HepG2 (cell line): ENCODE measurements at regions of chr20 and their contacts with region 1.

Region 1: GRCh38 chr20:18276821-18277220 is 11.5 kb upstream of the ZNF133 start:
- DNase-seq: peak; percentile 75
- ATAC-seq: peak; percentile 95
- H3K4me3 ChIP-seq: no peak overlapping the region
- H3K27ac ChIP-seq: no peak overlapping the region
- H3K4me1 ChIP-seq: peaks cover 10% of the 10 kb centered on the region
- H3K27me3 ChIP-seq: peaks cover 0 to 18% of the 10 kb centered on the region in 2 experiments; a peak in 1 of 5 replicates
- CTCF ChIP-seq: peak; percentile 98
- EP300 ChIP-seq: no peak
- POLR2A ChIP-seq: no peak
- RAD21 ChIP-seq: peak; percentile 92

Region 2: DNA sequence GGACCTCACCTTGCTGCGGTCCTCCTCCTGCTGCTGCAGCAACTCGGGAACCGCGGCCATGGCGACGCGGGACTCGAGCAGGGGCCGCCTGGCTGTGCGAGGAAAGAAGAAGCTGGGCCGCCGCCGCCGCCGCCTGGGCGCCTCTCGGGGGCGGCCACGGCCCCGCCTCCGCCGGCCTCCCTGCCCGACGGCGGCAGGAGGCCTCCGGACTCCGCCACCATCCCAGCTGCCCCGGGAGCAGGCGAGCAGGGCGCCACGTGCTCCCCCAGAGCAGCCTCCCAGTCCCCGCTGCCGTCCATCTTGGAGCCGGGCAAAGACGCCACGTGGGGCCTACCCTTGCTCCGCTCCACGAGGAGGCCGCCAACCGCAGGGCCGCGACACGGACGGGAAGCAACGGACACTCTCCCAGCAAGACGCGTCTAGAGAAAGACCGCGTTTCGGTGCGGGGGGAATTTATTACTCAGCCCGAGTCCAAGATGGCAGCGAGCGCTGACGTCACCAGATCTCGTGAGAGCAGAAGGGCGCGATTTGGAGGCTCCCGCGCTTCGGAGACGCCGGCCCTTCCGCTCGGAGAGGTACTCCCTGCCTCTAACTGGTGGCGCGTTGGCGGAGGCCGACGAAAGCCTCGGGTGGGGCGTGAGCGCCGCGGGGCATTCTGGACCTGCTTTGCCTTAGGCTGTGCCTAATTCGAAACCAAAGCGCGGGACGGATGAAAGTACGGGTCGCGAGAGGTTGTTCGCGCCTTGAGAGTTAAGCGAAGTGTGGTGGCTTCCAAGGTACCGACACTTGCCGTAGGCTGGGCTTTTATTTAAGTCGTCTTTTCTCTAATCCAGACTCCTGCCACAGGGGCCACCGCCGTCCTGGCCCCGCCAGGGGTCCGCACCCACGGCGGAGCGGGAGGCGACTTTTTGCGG is 308.2 kb before region 1 on chr20 and contains the starts of genes MGME1 and SNX5:
- CTCF ChIA-PET with region 1: no interaction called
- POLR2A ChIA-PET with region 1: no interaction called
- in situ Hi-C with region 1: no loop called
- intact Hi-C with region 1: loop called (anchors 10 kb)
- DNase-seq: peak; percentile 100
- ATAC-seq: peak; percentile 93
- H3K4me3 ChIP-seq: peak within 1 kb of the TSS; percentile 89 to 95 (median 89)
- H3K27ac ChIP-seq: peak within 1 kb of the TSS; percentile 97
- H3K4me1 ChIP-seq: peaks cover 52% of the 10 kb centered on the region
- H3K27me3 ChIP-seq: no peaks in the 10 kb centered on the region; a peak in 1 of 5 replicates
- CTCF ChIP-seq: peak; percentile 23
- EP300 ChIP-seq: peak; percentile 69 to 84; a peak in 3 of 4 replicates
- POLR2A ChIP-seq: peak; percentile 100
- RAD21 ChIP-seq: peak; percentile 74
- total RNA-seq, gene MGME1: 66.6 and 79.5 TPM in 2 replicates
- total RNA-seq, gene SNX5: 1,040 and 1,306 TPM in 2 replicates

Region 3: DNA sequence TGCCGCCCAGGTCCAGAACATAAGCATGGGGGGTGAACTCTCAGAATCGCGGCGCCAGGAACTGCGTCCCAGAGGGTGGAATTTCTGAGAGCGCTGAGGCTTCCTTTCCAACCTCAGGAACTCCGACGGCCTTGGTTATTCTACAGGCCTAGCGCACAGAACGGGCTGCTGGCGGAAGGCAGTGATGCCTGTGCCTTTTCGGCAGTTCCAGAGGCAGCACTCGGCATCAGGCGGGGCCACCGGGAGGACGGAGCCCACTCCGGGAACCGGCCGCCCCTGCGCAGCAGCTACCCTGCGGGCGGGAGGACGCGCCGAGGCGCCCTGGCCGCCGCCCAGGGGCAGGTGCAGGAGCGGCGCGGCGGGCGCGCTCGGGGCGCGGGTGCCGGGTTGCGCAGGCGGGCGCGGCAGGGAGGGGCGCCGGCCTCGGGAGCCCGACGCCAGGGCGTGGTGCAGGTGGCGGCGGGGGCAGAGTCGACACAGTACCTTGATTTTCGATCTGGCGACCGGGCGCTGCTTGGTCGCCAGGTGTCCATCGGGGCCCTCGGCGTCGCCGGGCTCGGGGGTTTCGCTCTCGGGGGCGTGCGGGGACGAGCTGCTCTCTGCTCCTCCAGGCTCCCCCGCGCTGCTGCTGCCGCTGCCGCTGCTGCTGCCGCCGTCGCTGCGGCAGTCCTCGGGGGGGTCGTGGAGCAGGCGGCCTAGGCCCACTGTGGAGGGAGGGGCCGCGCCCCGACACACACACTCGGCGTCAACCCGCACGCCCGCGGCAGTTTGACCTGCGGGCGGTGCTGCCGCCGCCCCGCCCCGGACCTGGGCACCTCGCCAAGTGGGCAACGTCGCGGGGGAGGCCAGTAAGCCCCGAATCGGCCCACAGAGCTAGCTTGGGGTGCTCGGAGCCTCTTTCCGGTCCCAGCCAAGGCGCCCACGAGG is 220.4 kb before region 1 on chr20:
- CTCF ChIA-PET with region 1: no interaction called
- POLR2A ChIA-PET with region 1: no interaction called
- in situ Hi-C with region 1: loop called (anchors 25 kb)
- intact Hi-C with region 1: no loop called
- DNase-seq: no peak
- ATAC-seq: peak; percentile 58
- H3K4me3 ChIP-seq: peak overlapping the region; percentile 53 to 74 (median 61); a peak in 5 of 6 replicates
- H3K27ac ChIP-seq: no peak overlapping the region
- H3K4me1 ChIP-seq: peaks cover 34% of the 10 kb centered on the region
- H3K27me3 ChIP-seq: peaks cover 29 to 95% of the 10 kb centered on the region in 2 experiments
- CTCF ChIP-seq: no peak
- EP300 ChIP-seq: no peak
- POLR2A ChIP-seq: no peak
- RAD21 ChIP-seq: no peak

Region 4: GRCh38 chr20:18144541-18145099 is 132.2 kb before region 1 on chr20:
- CTCF ChIA-PET with region 1: no interaction called
- POLR2A ChIA-PET with region 1: no interaction called
- in situ Hi-C with region 1: no loop called
- intact Hi-C with region 1: loop called (anchors 5 kb)
- DNase-seq: peak; percentile 95
- ATAC-seq: peak; percentile 96
- H3K4me3 ChIP-seq: no peak overlapping the region; a peak in 1 of 6 replicates
- H3K27ac ChIP-seq: peak overlapping the region; percentile 49
- H3K4me1 ChIP-seq: peaks cover 46% of the 10 kb centered on the region
- H3K27me3 ChIP-seq: no peaks in the 10 kb centered on the region
- CTCF ChIP-seq: no peak
- EP300 ChIP-seq: peak in 1 of 2 experiments; percentile 32; a peak in 1 of 4 replicates
- POLR2A ChIP-seq: no peak
- RAD21 ChIP-seq: peak; percentile 30; the same call in 1 of the 2 replicates